Activated CD4-positive, alpha-beta T cell treated with anti-CD3 and anti-CD28 coated beads for 36 hours (primary cell): ENCODE measurements at regions of chr3 and their contacts with region 1.

Region 1: GRCh38 chr3:17841190-17841828 is 98.9 kb upstream of the TBC1D5 start:
- DNase-seq: peak; percentile 87
- ATAC-seq: peak; percentile 97
- H3K4me3 Mint-ChIP-seq: no peak overlapping the region
- H3K27ac Mint-ChIP-seq: no peak overlapping the region
- H3K4me1 Mint-ChIP-seq: no peaks in the 10 kb centered on the region
- H3K27me3 Mint-ChIP-seq: no peaks in the 10 kb centered on the region

Region 2: GRCh38 chr3:17258823-17259436 is 582.4 kb before region 1 on chr3:
- CTCF ChIA-PET with region 1: interaction called, 19 read pairs
- POLR2A ChIA-PET with region 1: no interaction called
- intact Hi-C with region 1: loop called (anchors 1 kb)
- DNase-seq: peak; percentile 8
- ATAC-seq: no peak
- H3K4me3 Mint-ChIP-seq: no peak overlapping the region
- H3K27ac Mint-ChIP-seq: no peak overlapping the region
- H3K4me1 Mint-ChIP-seq: no peaks in the 10 kb centered on the region
- H3K27me3 Mint-ChIP-seq: no peaks in the 10 kb centered on the region

Region 3: DNA sequence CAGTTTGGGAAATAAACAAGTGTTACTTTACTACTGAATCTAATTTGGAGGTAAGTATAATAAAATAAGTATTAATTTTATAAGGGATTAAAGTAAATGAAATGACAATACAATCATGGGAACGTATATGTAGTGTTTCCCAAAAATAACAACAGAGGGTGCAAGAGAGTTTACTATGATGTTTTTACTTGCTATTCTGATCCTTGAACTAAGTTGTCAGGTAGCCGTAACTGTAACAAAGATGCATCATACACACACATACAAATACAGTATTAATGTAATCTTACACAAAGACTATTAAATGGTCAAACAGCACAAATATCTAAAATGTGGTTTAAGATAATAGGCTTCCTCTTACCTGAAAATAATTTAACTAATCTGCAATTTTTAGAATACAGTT is 410.3 kb before region 1 on chr3:
- CTCF ChIA-PET with region 1: interaction called, 25 read pairs
- POLR2A ChIA-PET with region 1: no interaction called
- intact Hi-C with region 1: loop called (anchors 1 kb)
- DNase-seq: no peak
- ATAC-seq: peak; percentile 42
- H3K4me3 Mint-ChIP-seq: no peak overlapping the region
- H3K27ac Mint-ChIP-seq: no peak overlapping the region
- H3K4me1 Mint-ChIP-seq: no peaks in the 10 kb centered on the region
- H3K27me3 Mint-ChIP-seq: no peaks in the 10 kb centered on the region

Region 4: DNA sequence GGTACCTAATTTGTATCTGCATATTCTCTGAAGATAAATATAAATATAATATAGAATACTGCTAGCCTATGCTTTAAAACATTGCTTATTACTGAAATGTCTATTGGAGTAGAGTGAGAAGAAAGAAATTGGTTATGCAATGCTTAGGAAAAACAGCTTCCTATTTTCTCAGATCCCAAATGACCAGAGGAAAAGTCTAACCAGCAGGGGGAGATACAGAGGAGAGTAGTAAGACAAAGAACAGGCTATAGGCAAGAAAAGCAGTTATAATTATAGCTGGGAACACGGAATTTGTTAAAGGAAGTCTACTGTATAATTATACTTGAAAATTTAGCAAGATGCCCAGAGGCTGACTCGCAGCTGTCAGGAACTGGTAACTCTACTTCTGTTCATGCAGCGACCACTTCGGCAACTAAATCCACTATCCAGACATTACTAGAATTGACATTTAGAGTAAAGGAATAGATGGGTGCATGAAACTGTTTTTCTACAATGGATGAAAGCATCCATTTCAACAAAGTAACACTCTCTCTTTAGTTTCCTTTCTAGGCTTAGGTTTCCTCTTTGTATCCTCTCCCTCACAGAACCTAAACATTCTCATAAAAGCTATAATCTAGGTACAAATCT is 196.1 kb before region 1 on chr3:
- CTCF ChIA-PET with region 1: interaction called, 9 read pairs
- POLR2A ChIA-PET with region 1: no interaction called
- intact Hi-C with region 1: loop called (anchors 1 to 5 kb)
- DNase-seq: no peak
- ATAC-seq: no peak
- H3K4me3 Mint-ChIP-seq: no peak overlapping the region
- H3K27ac Mint-ChIP-seq: no peak overlapping the region
- H3K4me1 Mint-ChIP-seq: peaks cover 11% of the 10 kb centered on the region
- H3K27me3 Mint-ChIP-seq: no peaks in the 10 kb centered on the region

Region 5: GRCh38 chr3:17823816-17824215 is 17.5 kb before region 1 on chr3:
- CTCF ChIA-PET with region 1: interaction called, 27 read pairs
- POLR2A ChIA-PET with region 1: no interaction called
- intact Hi-C with region 1: no loop called
- DNase-seq: no peak
- ATAC-seq: no peak
- H3K4me3 Mint-ChIP-seq: no peak overlapping the region
- H3K27ac Mint-ChIP-seq: no peak overlapping the region
- H3K4me1 Mint-ChIP-seq: peaks cover 3% of the 10 kb centered on the region
- H3K27me3 Mint-ChIP-seq: peaks cover 7% of the 10 kb centered on the region